Activated CD4-positive, alpha-beta T cell treated with anti-CD3 and anti-CD28 coated beads, Interleukin-2, amount 10 ng/mL, durations not matched to agents 7 days and 5 days (primary cell): ENCODE measurements at regions of chr13 and their contacts with region 1.

Region 1: GRCh38 chr13:29923554-29924481 is 73.4 kb upstream of the UBL3 start:
- DNase-seq: peak; percentile 20
- H3K4me3 Mint-ChIP-seq: no peak overlapping the region
- H3K27ac Mint-ChIP-seq: no peak overlapping the region
- H3K4me1 Mint-ChIP-seq: peaks cover 42% of the 10 kb centered on the region
- H3K27me3 Mint-ChIP-seq: peaks cover 2% of the 10 kb centered on the region

Region 2: DNA sequence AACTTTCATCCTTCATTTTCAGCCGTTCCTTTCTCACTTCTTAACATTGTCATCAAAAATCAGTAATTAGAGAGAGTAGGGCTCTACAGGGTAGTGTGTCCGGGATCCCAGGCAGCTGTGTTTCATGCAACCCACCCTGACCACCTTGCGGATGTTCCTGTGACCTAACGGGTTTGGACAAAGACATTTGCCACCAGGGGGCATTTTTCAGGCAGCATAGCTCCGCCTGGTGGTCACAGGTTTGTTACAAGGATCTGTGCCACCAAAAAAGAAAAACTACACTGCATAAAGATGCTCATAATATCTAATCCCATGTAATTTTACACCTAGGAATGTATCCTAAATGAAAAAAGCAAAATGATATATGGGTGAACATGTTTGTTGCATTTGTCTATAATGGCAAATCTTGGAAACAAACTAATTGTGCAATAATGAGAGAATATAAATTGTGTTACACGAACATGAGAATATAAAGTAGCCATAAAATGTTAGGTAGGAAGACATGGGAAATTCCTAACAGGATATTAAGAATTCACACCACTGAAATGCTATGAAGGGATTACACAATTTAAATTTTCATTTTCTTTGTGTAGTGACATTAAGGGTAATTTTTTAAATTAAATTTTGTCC is 451.4 kb before region 1 on chr13:
- CTCF ChIA-PET with region 1: no interaction called
- POLR2A ChIA-PET with region 1: no interaction called
- DNase-seq: peak; percentile 65
- H3K4me3 Mint-ChIP-seq: no peak overlapping the region
- H3K27ac Mint-ChIP-seq: no peak overlapping the region
- H3K4me1 Mint-ChIP-seq: peaks cover 1% of the 10 kb centered on the region
- H3K27me3 Mint-ChIP-seq: peaks cover 3% of the 10 kb centered on the region

Region 3: DNA sequence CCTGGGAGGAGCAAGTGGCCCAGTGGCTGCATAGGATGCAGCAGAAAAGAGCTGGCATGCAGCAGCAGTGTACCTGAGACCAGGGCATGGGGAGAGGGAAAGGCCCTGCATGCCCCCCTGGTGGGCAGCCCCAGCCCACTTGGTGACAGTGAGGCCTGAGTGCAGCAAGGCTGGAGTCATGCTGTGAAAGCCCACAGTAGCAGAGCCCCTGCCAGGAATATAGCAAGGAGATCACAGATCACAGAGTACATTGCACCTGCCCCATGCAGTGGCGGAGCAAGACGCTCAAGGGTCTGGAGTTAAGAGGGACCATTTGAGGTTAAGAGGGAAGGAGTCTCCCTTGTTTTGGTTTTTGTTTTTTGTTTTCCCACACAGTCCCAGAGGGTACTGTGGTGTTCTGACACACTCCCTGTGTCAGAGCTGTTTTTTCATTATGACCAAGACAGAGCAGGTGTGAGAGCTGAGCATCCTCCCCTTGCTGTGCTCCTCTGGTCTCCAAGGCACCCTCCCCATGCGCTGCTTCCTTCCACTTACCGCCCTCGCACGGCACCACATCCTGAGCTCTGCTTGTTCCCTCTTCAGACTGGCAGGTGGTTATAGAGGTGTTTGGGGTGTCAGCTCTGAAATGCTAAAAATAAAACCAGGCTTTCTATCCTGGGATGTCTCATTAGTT is 11.6 kb after region 1 on chr13:
- CTCF ChIA-PET with region 1: interaction called, 46 read pairs
- POLR2A ChIA-PET with region 1: interaction called, 4 read pairs
- DNase-seq: peak; percentile 90
- H3K4me3 Mint-ChIP-seq: peak overlapping the region; percentile 90
- H3K27ac Mint-ChIP-seq: peak overlapping the region; percentile 98
- H3K4me1 Mint-ChIP-seq: peaks cover 74% of the 10 kb centered on the region
- H3K27me3 Mint-ChIP-seq: no peaks in the 10 kb centered on the region

Region 4: DNA sequence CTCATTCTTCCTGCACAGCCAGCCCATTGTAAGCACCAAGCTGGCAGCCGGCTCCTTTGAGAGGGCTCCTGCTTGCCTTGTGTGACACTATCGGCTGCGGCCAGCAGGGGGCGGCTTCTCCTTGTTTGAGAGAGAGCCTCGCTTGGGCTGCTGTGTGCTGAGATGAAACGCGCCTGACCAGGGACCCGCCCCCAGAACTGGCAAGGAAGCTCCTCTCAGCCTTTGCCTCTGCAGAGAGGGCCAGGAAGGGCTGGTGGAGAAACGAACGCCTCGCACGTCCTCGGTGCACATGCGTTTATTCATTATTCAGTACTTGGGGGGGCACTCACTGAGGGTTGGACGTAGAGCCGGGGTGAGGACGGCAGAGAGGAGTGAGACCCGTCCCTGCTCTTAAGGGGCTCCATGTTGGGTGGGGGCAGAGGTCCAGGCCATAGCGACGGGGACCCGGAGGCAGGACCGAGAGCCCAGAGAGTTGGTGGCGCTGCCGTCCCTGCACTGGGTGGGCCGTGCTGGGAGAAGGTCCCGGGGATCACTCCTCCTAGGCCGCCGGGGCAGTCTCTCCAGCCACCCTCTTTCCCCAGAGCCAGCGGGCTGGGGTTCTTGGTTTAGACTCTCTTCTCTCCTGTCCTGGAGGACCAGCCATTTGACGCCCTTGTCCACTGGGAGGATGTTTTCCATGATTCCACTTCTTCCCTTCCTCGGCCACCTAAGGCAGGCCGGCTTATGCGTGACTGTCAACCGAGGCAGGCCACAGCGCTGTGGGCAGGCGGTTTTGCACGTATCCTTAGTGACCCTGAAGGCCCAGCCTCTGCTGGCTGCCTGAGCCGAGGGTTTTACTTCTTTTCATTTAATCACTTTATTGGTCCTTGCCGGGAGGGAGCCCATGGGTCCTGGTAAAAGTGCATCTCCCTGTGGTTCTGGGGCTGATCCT is 209.1 kb after region 1 on chr13:
- CTCF ChIA-PET with region 1: no interaction called
- POLR2A ChIA-PET with region 1: no interaction called
- DNase-seq: peak; percentile 99
- H3K4me3 Mint-ChIP-seq: no peak overlapping the region
- H3K27ac Mint-ChIP-seq: peak overlapping the region; percentile 80
- H3K4me1 Mint-ChIP-seq: peaks cover 22% of the 10 kb centered on the region
- H3K27me3 Mint-ChIP-seq: no peaks in the 10 kb centered on the region